ENCODE measurements at regions of chr4 and their contacts with region 1.

Region 1: GRCh38 chr4:88284439-88285234 is at the start of gene PPM1K:
- DNase-seq: peak; percentile 97
- H3K4me3 Mint-ChIP-seq: peak within 1 kb of the TSS; percentile 94
- H3K27ac Mint-ChIP-seq: peak within 1 kb of the TSS; percentile 94
- H3K4me1 Mint-ChIP-seq: peaks cover 17% of the 10 kb centered on the region
- H3K27me3 Mint-ChIP-seq: no peaks in the 10 kb centered on the region
- CTCF ChIP-seq: no peak
- total RNA-seq, gene PPM1K: 19.5 and 21.0 TPM in 2 replicates

Region 2: DNA sequence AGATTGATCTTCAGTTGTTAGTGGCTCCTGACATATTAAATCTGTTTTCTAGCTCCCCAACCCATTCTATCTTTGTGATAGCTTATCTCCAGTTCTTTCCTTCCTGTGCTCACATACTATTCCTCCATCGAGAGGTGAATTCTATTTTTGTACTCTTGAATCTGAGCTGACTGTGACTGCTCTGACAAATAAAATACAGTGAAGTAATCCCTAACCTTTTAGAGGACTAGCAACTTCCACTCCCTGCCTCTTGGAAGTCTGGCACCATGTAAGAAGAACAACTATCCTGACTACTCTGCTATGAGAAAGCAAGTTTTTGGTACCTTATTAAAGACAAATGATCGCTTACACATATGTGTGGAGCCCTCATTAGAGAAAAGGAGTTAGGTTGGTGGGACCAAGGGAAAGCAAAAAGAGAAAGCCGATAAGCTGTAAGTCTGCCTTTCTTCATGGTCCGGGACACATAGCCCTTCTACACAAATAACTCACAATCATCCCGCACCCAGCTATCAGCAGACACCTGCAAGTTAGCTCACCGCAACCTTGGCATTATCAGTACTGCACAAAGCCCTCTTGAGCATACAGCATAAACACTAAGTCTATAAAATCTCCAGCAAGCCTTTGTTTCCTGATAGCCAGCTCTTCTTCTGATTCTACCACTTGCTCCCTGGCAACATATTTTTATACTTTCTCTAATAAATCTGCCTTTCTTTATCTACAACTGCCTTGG is 13.3 kb after region 1 on chr4:
- CTCF ChIA-PET with region 1: interaction called, 3 read pairs
- POLR2A ChIA-PET with region 1: interaction called, 20 read pairs
- intact Hi-C with region 1: no loop called
- DNase-seq: no peak
- H3K4me3 Mint-ChIP-seq: no peak overlapping the region
- H3K27ac Mint-ChIP-seq: no peak overlapping the region
- H3K4me1 Mint-ChIP-seq: no peaks in the 10 kb centered on the region
- H3K27me3 Mint-ChIP-seq: no peaks in the 10 kb centered on the region
- CTCF ChIP-seq: no peak

Region 3: GRCh38 chr4:88341227-88342192 is 56.9 kb after region 1 on chr4:
- CTCF ChIA-PET with region 1: interaction called, 6 read pairs
- POLR2A ChIA-PET with region 1: interaction called, 20 read pairs
- intact Hi-C with region 1: no loop called
- DNase-seq: peak; percentile 59
- H3K4me3 Mint-ChIP-seq: no peak overlapping the region
- H3K27ac Mint-ChIP-seq: no peak overlapping the region
- H3K4me1 Mint-ChIP-seq: peaks cover 6% of the 10 kb centered on the region
- H3K27me3 Mint-ChIP-seq: no peaks in the 10 kb centered on the region
- CTCF ChIP-seq: no peak

Region 4: GRCh38 chr4:88378691-88379559 is 94.3 kb after region 1 on chr4 and contains the start of gene HERC6:
- CTCF ChIA-PET with region 1: interaction called, 4 read pairs
- POLR2A ChIA-PET with region 1: interaction called, 17 read pairs
- intact Hi-C with region 1: no loop called
- DNase-seq: peak; percentile 94
- H3K4me3 Mint-ChIP-seq: peak within 1 kb of the TSS; percentile 90
- H3K27ac Mint-ChIP-seq: peak within 1 kb of the TSS; percentile 66
- H3K4me1 Mint-ChIP-seq: no peaks in the 10 kb centered on the region
- H3K27me3 Mint-ChIP-seq: no peaks in the 10 kb centered on the region
- CTCF ChIP-seq: peak; percentile 57
- total RNA-seq, gene HERC6: 1.7 and 2.4 TPM in 2 replicates

Region 5: GRCh38 chr4:88514557-88515511 is 230.2 kb after region 1 on chr4:
- CTCF ChIA-PET with region 1: no interaction called
- POLR2A ChIA-PET with region 1: interaction called, 5 read pairs
- intact Hi-C with region 1: loop called (anchors 5 kb)
- DNase-seq: no peak
- H3K4me3 Mint-ChIP-seq: no peak overlapping the region
- H3K27ac Mint-ChIP-seq: no peak overlapping the region
- H3K4me1 Mint-ChIP-seq: no peaks in the 10 kb centered on the region
- H3K27me3 Mint-ChIP-seq: no peaks in the 10 kb centered on the region
- CTCF ChIP-seq: no peak